ENCODE measurements at regions of chr1 and their contacts with region 1.

Region 1: DNA sequence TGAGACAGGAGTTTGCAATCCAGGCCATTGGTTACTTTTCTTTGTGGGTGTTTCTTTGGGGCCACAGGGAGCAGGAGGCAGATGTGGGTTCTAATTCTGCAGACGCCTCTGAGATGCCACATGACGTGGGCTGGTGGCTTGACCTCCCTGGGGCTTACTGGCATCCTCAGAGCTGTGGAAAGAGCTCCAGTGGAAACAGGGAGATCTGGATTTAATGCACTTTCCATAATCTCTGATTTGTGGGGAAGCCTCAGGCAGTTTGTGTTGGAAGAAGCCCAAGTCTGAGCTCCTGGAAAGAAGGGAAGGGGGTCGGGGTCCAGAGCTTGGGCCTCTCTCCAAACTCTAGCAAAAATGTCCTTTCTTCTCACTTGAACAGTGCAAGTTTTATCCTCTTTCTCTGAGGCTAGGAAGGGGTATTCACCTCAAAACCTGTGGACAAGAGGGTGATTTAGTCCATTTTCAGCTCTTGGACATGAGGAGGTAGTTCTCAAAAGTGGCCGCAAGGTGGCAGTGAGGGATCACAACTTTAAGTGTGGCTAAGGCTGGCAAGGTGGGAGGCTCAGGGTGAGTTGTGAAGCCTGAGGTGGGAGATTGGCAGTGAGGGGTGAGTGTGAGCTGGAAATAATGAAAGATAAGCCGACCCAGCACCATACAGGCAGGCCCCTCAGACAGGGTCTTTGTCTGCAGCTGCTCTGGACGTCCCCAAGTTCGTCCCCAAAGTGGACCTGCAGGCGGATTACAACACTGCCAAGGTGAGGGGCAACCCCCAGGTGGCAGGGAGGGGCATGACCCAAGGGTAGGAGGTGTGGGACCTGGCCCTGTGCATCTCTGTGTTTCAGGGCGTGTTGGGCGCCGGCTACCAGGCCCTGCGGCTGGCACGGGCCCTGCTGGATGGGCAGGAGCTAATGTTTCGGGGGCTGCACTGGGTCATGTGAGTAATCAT is 9.2 kb downstream of the IKBKE start:
- DNase-seq: peak; percentile 89
- H3K4me3 ChIP-seq: no peak overlapping the region
- H3K27ac ChIP-seq: no peak overlapping the region
- H3K4me1 ChIP-seq: peaks cover 12% of the 10 kb centered on the region in 2 experiments; a peak in 3 of 4 replicates
- H3K27me3 ChIP-seq: no peaks in the 10 kb centered on the region
- CTCF ChIP-seq: peak; percentile 80
- EP300 ChIP-seq: no peak
- RAD21 ChIP-seq: peak; percentile 85

Region 2: DNA sequence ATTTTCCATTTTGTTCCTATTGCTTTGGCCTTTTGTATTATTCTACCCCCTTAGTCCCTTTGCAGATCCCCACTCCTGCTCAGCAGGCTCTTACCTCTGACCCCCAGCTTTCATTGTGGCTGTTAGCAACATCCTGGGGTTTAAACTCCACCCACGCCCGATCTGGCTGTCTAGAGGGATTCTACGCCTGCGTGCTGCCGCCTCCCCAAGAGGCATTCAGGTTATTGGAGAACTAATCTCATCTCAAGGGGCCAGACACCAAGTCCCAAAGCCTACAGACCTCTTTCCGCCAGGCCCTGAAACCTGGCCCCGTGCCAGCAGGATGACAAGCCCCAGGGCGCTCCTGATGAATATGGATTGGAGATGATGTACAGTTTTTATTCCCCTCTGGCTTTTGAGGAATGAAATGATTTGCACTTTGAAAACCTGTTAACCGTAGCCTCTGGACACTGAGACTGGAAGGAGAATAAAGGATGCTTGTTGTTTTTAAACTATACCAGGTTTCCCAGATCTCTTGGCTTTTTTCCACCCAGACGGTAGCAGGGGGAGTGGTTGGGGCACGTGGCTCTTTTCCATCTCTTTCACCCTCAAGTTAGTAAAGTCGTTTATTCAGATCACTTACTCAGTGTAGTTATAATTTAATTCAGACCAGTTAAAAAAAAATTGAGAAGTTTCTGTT is 23.6 kb before region 1 on chr1:
- CTCF ChIA-PET with region 1: interaction called, 92 read pairs
- POLR2A ChIA-PET with region 1: no interaction called
- DNase-seq: peak; percentile 83
- H3K4me3 ChIP-seq: no peak overlapping the region
- H3K27ac ChIP-seq: peak overlapping the region in 1 of 2 experiments; percentile 67; a peak in 2 of 4 replicates
- H3K4me1 ChIP-seq: peaks cover 22 to 33% of the 10 kb centered on the region in 2 experiments
- H3K27me3 ChIP-seq: no peaks in the 10 kb centered on the region
- CTCF ChIP-seq: no peak
- EP300 ChIP-seq: peak in 1 of 2 experiments; percentile 78; a peak in 2 of 4 replicates
- RAD21 ChIP-seq: no peak; the same call in 1 of the 2 replicates

Region 3: GRCh38 chr1:206461602-206462455 is 17.6 kb before region 1 on chr1:
- CTCF ChIA-PET with region 1: interaction called, 92 read pairs
- POLR2A ChIA-PET with region 1: no interaction called
- DNase-seq: peak; percentile 76
- H3K4me3 ChIP-seq: no peak overlapping the region; a peak in 1 of 4 replicates
- H3K27ac ChIP-seq: no peak overlapping the region
- H3K4me1 ChIP-seq: peaks cover 13 to 19% of the 10 kb centered on the region in 2 experiments
- H3K27me3 ChIP-seq: no peaks in the 10 kb centered on the region
- CTCF ChIP-seq: peak; percentile 89
- EP300 ChIP-seq: no peak
- RAD21 ChIP-seq: peak; percentile 72

Region 4: DNA sequence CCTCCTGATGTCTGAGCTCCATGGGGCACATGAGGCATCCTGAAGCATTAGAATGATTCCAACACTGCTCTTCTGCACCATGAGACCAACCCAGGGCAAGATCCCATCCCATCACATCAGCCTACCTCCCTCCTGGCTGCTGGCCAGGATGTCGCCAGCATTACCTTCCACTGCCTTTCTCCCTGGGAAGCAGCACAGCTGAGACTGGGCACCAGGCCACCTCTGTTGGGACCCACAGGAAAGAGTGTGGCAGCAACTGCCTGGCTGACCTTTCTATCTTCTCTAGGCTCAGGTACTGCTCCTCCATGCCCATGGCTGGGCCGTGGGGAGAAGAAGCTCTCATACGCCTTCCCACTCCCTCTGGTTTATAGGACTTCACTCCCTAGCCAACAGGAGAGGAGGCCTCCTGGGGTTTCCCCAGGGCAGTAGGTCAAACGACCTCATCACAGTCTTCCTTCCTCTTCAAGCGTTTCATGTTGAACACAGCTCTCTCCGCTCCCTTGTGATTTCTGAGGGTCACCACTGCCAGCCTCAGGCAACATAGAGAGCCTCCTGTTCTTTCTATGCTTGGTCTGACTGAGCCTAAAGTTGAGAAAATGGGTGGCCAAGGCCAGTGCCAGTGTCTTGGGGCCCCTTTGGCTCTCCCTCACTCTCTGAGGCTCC is 16.8 kb after region 1 on chr1:
- CTCF ChIA-PET with region 1: interaction called, 103 read pairs
- POLR2A ChIA-PET with region 1: no interaction called
- DNase-seq: no peak
- H3K4me3 ChIP-seq: no peak overlapping the region
- H3K27ac ChIP-seq: no peak overlapping the region; a peak in 1 of 4 replicates
- H3K4me1 ChIP-seq: peaks cover 16 to 19% of the 10 kb centered on the region in 2 experiments; a peak in 2 of 4 replicates
- H3K27me3 ChIP-seq: no peaks in the 10 kb centered on the region
- CTCF ChIP-seq: no peak
- EP300 ChIP-seq: no peak
- RAD21 ChIP-seq: no peak

Region 5: GRCh38 chr1:206507284-206508129 is 28.1 kb after region 1 on chr1 and contains the start of gene RASSF5:
- CTCF ChIA-PET with region 1: interaction called, 26 read pairs
- POLR2A ChIA-PET with region 1: no interaction called
- DNase-seq: peak; percentile 77
- H3K4me3 ChIP-seq: peak within 1 kb of the TSS; percentile 64 to 65
- H3K27ac ChIP-seq: no peak within 1 kb of the TSS
- H3K4me1 ChIP-seq: peaks cover 10 to 16% of the 10 kb centered on the region in 2 experiments; a peak in 2 of 4 replicates
- H3K27me3 ChIP-seq: no peaks in the 10 kb centered on the region
- CTCF ChIP-seq: no peak
- EP300 ChIP-seq: no peak
- RAD21 ChIP-seq: no peak
- polyA plus RNA-seq, gene RASSF5: 1.7 and 2.2 TPM in 2 replicates

Region 6: GRCh38 chr1:206544562-206545257 is 65.3 kb after region 1 on chr1:
- CTCF ChIA-PET with region 1: interaction called, 27 read pairs
- POLR2A ChIA-PET with region 1: no interaction called
- DNase-seq: peak; percentile 86
- H3K4me3 ChIP-seq: no peak overlapping the region; a peak in 1 of 4 replicates
- H3K27ac ChIP-seq: no peak overlapping the region
- H3K4me1 ChIP-seq: no peaks in the 10 kb centered on the region; a peak in 1 of 4 replicates
- H3K27me3 ChIP-seq: no peaks in the 10 kb centered on the region; the same call in 1 of the 2 replicates
- CTCF ChIP-seq: peak; percentile 86
- EP300 ChIP-seq: no peak
- RAD21 ChIP-seq: peak; percentile 73

Region 7: GRCh38 chr1:206575165-206575893 is 95.9 kb after region 1 on chr1:
- CTCF ChIA-PET with region 1: interaction called, 17 read pairs
- POLR2A ChIA-PET with region 1: no interaction called
- DNase-seq: no peak
- H3K4me3 ChIP-seq: no peak overlapping the region
- H3K27ac ChIP-seq: no peak overlapping the region
- H3K4me1 ChIP-seq: peaks cover 0 to 14% of the 10 kb centered on the region in 2 experiments; a peak in 3 of 4 replicates
- H3K27me3 ChIP-seq: no peaks in the 10 kb centered on the region
- CTCF ChIP-seq: no peak
- EP300 ChIP-seq: no peak
- RAD21 ChIP-seq: no peak

Region 8: GRCh38 chr1:206856674-206857464 is 377.4 kb after region 1 on chr1:
- CTCF ChIA-PET with region 1: no interaction called
- POLR2A ChIA-PET with region 1: no interaction called
- DNase-seq: no peak
- H3K4me3 ChIP-seq: no peak overlapping the region
- H3K27ac ChIP-seq: no peak overlapping the region
- H3K4me1 ChIP-seq: no peaks in the 10 kb centered on the region
- H3K27me3 ChIP-seq: peaks cover 5% of the 10 kb centered on the region; the same call in 1 of the 2 replicates
- CTCF ChIP-seq: peak; percentile 30; the same call in 1 of the 2 replicates
- EP300 ChIP-seq: no peak
- RAD21 ChIP-seq: no peak